ENCODE measurements at regions of chr11 and their contacts with region 1.

Region 1: DNA sequence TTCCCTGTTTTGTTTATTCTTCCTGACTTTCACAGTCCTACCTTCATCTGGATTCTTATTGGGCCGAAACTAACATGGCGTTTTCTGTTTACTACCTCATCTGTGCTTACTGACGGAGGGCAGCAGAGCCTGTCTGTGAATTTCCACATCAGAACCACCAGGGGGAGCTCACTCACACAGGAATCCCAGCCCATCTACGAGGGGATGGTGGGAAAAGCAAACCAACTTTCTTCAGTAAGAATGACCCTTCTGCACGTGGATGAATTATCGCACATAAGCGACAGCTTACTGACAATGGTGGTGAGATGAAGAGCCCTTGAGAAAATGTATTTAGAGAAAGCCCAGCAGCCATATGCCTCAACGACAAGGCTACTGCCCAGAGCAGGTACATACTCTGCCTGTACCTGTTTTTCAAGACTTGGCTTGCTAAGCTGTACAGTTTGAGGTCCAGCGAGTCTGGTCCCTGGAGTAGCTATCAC is 42.5 kb downstream of the LARGE2 start:
- DNase-seq: peak; percentile 66
- ATAC-seq: peak; percentile 95
- H3K4me3 Mint-ChIP-seq: no peak overlapping the region
- H3K27ac Mint-ChIP-seq: no peak overlapping the region
- H3K4me1 Mint-ChIP-seq: no peaks in the 10 kb centered on the region
- H3K27me3 Mint-ChIP-seq: no peaks in the 10 kb centered on the region
- CTCF ChIP-seq: peak; percentile 97

Region 2: DNA sequence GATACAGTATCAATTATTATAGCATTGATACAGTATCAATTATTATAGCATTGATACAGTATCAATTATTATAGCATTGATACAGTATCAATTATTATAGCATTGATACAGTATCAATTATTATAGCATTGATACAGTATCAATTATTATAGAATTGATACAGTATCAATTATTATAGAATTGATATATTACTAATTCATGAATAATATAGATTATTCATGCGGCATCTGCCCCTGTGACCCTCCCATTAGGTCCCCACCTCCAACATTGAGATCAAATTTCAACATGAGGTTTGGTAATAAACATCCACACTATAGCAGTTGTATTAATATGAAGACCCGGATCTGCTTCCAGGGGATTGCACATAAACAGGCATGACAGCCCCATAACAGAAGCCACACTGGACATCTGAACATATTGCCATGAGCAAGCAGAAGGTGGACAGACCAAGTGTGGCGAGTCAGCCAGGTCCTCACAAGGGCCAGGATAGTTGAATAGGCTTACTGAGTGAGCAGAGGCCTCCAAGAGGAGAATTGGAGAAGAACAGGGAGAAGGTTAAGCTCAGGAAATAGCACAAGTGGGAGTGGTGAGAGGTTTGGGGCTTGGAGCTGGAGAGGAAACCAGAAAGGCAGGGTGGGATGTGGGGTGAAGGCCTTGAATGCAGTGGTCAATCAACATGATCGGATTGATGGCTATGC is 149.4 kb before region 1 on chr11:
- CTCF ChIA-PET with region 1: no interaction called
- POLR2A ChIA-PET with region 1: no interaction called
- intact Hi-C with region 1: no loop called
- DNase-seq: no peak
- ATAC-seq: peak; percentile 27
- H3K4me3 Mint-ChIP-seq: no peak overlapping the region
- H3K27ac Mint-ChIP-seq: no peak overlapping the region
- H3K4me1 Mint-ChIP-seq: peaks cover 6% of the 10 kb centered on the region
- H3K27me3 Mint-ChIP-seq: no peaks in the 10 kb centered on the region
- CTCF ChIP-seq: no peak

Region 3: GRCh38 chr11:45941285-45941684 is 23.7 kb before region 1 on chr11:
- CTCF ChIA-PET with region 1: interaction called, 14 read pairs
- POLR2A ChIA-PET with region 1: no interaction called
- intact Hi-C with region 1: no loop called
- DNase-seq: no peak
- ATAC-seq: no peak
- H3K4me3 Mint-ChIP-seq: no peak overlapping the region
- H3K27ac Mint-ChIP-seq: no peak overlapping the region
- H3K4me1 Mint-ChIP-seq: no peaks in the 10 kb centered on the region
- H3K27me3 Mint-ChIP-seq: no peaks in the 10 kb centered on the region
- CTCF ChIP-seq: no peak

Region 4: DNA sequence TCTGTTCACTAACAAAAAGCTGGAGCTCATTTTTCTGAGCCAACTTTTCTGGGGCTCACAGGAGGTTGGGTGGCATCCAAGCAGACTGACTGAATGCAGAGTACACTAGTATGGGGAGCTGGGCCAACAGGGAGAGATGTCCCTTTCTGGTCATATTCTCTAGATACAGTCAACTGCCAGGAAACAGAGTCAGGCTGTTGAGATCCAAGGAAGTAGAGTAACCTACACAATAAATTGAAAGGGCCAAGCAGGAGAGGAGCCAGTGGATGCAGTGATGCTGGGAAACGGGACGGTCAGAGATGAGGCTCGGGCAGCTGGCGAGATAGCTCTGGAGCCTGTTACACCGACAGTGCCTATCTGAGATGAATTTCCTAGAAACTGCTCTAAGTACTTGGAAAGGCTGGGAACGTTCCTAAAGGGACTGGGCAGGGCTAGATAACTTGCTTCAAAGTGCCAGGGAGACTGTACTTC is 28.6 kb after region 1 on chr11:
- CTCF ChIA-PET with region 1: interaction called, 28 read pairs
- POLR2A ChIA-PET with region 1: no interaction called
- intact Hi-C with region 1: no loop called
- DNase-seq: no peak
- ATAC-seq: no peak
- H3K4me3 Mint-ChIP-seq: no peak overlapping the region
- H3K27ac Mint-ChIP-seq: no peak overlapping the region
- H3K4me1 Mint-ChIP-seq: no peaks in the 10 kb centered on the region
- H3K27me3 Mint-ChIP-seq: no peaks in the 10 kb centered on the region
- CTCF ChIP-seq: no peak

Region 5: DNA sequence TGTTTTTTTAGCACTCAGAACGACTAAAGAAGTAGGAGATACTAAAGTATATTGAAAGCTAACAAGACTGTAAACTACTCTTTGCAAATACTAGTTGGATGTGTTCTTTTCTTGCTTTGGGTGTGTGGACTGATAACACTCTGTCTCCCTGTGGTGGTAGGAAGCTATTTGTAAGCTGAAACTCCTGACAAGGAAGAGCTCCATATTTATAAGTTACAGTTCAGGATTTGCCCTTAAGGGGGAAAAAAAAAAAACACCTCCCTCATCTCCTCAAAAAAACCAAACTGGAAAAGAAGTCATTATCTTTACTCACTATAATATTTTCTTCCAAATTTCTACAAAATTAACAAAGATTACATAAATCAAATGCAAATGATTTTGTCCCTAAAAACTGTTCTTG is 52.4 kb after region 1 on chr11:
- CTCF ChIA-PET with region 1: interaction called, 25 read pairs
- POLR2A ChIA-PET with region 1: interaction called, 3 read pairs
- intact Hi-C with region 1: no loop called
- DNase-seq: no peak
- ATAC-seq: no peak
- H3K4me3 Mint-ChIP-seq: no peak overlapping the region
- H3K27ac Mint-ChIP-seq: no peak overlapping the region
- H3K4me1 Mint-ChIP-seq: peaks cover 4% of the 10 kb centered on the region
- H3K27me3 Mint-ChIP-seq: no peaks in the 10 kb centered on the region
- CTCF ChIP-seq: no peak

Region 6: DNA sequence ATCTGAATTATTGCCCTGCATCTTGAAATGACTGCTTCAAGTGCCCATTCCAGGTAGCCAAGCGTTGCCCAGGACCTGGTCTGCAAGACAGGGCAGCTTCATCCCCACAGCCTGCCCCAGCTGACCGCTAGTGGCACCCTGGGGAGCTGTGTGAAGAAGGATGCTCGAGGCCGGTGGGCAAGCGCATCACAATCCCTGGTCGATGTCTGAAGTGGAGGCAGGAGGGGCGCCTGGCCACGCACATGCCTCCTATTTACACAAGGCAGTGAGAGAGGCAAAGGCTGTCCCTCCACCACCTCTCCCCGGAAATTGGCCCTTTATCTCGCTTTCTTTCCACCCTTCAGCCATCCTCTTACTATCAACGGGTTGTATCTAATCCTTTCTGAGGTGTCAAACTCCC is 184.4 kb after region 1 on chr11:
- CTCF ChIA-PET with region 1: no interaction called
- POLR2A ChIA-PET with region 1: no interaction called
- intact Hi-C with region 1: no loop called
- DNase-seq: no peak
- ATAC-seq: no peak
- H3K4me3 Mint-ChIP-seq: no peak overlapping the region
- H3K27ac Mint-ChIP-seq: no peak overlapping the region
- H3K4me1 Mint-ChIP-seq: peaks cover 1% of the 10 kb centered on the region
- H3K27me3 Mint-ChIP-seq: peaks cover 4% of the 10 kb centered on the region
- CTCF ChIP-seq: no peak

Region 7: GRCh38 chr11:46238967-46239800 is 274.2 kb after region 1 on chr11:
- CTCF ChIA-PET with region 1: interaction called, 13 read pairs
- POLR2A ChIA-PET with region 1: no interaction called
- intact Hi-C with region 1: no loop called
- DNase-seq: peak; percentile 84
- ATAC-seq: peak; percentile 66
- H3K4me3 Mint-ChIP-seq: peak overlapping the region; percentile 60
- H3K27ac Mint-ChIP-seq: no peak overlapping the region
- H3K4me1 Mint-ChIP-seq: peaks cover 37% of the 10 kb centered on the region
- H3K27me3 Mint-ChIP-seq: peaks cover 16% of the 10 kb centered on the region
- CTCF ChIP-seq: peak; percentile 96